Activated B cell treated with CpG ODN at 0.5 μM for 24 hours (primary cell): ENCODE measurements at regions of chr7 and their contacts with region 1.

Region 1: DNA sequence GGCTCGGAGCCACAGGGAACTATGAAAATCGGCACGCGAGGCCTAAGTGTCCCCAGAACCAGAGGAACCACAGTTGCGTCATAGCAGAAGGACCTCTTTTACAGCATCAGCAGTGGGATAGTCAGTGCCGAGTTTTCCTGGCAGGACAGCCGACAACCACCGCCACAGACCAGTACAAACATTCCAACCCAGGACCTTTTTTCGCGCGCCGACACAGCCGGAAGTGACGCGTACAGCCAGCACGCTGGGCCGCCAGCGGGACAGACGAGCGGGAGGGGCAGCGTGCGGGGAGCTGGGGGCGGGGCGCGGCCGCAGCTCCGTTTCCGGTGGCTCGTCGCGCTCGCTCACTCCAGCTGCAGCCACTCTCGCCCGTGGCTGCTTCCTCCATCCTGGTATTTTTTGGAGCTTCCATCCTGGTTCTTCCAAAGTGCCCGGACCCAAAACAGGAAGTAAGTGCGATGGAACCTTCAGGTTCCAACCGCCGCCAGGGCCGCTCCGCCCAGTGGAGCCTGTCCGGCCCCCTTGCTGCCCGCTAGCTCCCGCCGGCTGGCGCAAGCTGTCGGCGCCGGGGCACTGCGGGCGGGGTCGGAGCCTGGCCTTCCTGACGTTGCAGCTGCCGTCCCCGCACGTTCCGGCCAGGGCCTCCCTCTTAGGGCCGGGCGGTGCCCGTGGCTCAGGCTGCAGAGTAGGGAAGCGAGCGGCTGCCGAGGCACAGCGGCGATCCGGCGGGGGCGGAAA is at the start of gene DMTF1:
- DNase-seq: peak; percentile 81
- ATAC-seq: peak; percentile 85
- H3K4me3 Mint-ChIP-seq: peak within 1 kb of the TSS; percentile 99
- H3K27ac Mint-ChIP-seq: peak within 1 kb of the TSS; percentile 99
- H3K4me1 Mint-ChIP-seq: peaks cover 49% of the 10 kb centered on the region
- H3K27me3 Mint-ChIP-seq: no peaks in the 10 kb centered on the region
- CTCF ChIP-seq: no peak
- total RNA-seq, gene DMTF1: 159 and 175 TPM in 2 replicates

Region 2: DNA sequence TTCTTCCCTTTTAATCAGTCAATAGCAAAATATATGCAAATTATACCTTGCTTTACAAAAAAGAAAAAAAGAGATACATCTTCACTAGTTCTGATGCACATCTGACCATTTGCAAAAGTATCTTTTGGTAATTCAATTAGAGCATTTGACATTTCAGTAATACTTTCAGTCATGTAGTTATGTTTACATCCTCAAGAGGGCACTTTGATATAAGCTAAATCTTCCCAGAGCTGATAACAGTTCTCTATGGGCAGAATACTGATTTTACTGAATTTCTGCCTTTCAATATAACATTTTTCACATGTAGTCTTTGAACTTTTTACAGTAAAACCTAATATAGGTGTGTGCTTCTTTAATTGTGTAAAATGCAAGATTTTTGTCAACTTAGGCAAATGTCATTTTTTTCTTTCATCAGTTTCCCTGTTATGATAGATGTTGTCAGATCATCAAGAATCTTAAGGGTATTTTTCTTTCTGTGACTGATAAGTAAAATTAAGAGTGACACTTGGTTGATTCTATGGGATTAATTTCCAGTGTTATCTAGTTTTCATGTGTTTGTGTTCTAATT is 1261.9 kb before region 1 on chr7:
- CTCF ChIA-PET with region 1: no interaction called
- POLR2A ChIA-PET with region 1: no interaction called
- intact Hi-C with region 1: no loop called
- DNase-seq: no peak
- ATAC-seq: no peak
- H3K4me3 Mint-ChIP-seq: no peak overlapping the region
- H3K27ac Mint-ChIP-seq: no peak overlapping the region
- H3K4me1 Mint-ChIP-seq: no peaks in the 10 kb centered on the region
- H3K27me3 Mint-ChIP-seq: no peaks in the 10 kb centered on the region
- CTCF ChIP-seq: no peak

Region 3: GRCh38 chr7:86939197-86939814 is 213.0 kb before region 1 on chr7:
- CTCF ChIA-PET with region 1: interaction called, 8 read pairs
- POLR2A ChIA-PET with region 1: no interaction called
- intact Hi-C with region 1: loop called (anchors 1 kb)
- DNase-seq: no peak
- ATAC-seq: peak; percentile 66
- H3K4me3 Mint-ChIP-seq: no peak overlapping the region
- H3K27ac Mint-ChIP-seq: no peak overlapping the region
- H3K4me1 Mint-ChIP-seq: no peaks in the 10 kb centered on the region
- H3K27me3 Mint-ChIP-seq: no peaks in the 10 kb centered on the region
- CTCF ChIP-seq: peak; percentile 35

Region 4: DNA sequence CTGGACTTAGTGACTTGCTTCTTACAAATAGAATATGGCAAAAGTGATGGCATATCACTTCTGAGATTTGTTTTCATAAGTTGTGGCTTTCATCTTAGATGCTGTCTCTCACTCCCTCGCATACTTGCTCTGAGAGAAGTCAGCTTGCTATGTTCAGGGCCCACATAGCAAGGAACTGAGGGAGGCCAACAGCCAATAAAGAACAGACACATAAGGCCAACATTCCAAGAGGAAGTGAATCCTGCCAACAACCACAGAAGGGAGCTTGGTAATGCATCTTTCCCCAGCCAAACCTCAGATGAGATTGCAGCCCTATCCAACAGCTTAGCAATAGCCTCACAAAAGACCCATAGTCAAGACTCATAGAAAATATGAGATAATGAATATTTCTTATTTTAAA is 39.2 kb before region 1 on chr7:
- CTCF ChIA-PET with region 1: no interaction called
- POLR2A ChIA-PET with region 1: no interaction called
- intact Hi-C with region 1: no loop called
- DNase-seq: no peak
- ATAC-seq: no peak
- H3K4me3 Mint-ChIP-seq: no peak overlapping the region
- H3K27ac Mint-ChIP-seq: no peak overlapping the region
- H3K4me1 Mint-ChIP-seq: no peaks in the 10 kb centered on the region
- H3K27me3 Mint-ChIP-seq: peaks cover 1% of the 10 kb centered on the region
- CTCF ChIP-seq: no peak

Region 5: DNA sequence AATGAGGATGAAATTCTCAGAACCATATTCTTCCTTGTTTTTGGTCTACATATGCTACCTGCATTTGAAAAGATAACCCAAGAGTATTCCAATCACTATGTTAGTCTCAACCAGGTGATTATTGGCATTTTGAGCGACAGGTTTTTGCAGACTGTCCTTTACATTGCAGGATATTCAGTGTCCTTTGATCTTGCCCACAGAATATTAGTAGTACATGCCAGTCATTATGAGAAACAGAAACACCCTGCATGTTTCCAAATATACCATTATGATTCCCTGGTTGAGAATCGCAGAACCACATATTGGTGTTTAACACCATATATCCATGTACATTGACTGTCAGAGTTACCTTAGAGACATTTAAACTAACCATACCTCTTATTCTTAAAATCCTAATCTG is 36.7 kb after region 1 on chr7:
- CTCF ChIA-PET with region 1: no interaction called
- POLR2A ChIA-PET with region 1: interaction called, 8 read pairs
- intact Hi-C with region 1: loop called (anchors 5 kb)
- DNase-seq: no peak
- ATAC-seq: no peak
- H3K4me3 Mint-ChIP-seq: no peak overlapping the region
- H3K27ac Mint-ChIP-seq: peak overlapping the region; percentile 71
- H3K4me1 Mint-ChIP-seq: peaks cover 28% of the 10 kb centered on the region
- H3K27me3 Mint-ChIP-seq: no peaks in the 10 kb centered on the region
- CTCF ChIP-seq: no peak

Region 6: DNA sequence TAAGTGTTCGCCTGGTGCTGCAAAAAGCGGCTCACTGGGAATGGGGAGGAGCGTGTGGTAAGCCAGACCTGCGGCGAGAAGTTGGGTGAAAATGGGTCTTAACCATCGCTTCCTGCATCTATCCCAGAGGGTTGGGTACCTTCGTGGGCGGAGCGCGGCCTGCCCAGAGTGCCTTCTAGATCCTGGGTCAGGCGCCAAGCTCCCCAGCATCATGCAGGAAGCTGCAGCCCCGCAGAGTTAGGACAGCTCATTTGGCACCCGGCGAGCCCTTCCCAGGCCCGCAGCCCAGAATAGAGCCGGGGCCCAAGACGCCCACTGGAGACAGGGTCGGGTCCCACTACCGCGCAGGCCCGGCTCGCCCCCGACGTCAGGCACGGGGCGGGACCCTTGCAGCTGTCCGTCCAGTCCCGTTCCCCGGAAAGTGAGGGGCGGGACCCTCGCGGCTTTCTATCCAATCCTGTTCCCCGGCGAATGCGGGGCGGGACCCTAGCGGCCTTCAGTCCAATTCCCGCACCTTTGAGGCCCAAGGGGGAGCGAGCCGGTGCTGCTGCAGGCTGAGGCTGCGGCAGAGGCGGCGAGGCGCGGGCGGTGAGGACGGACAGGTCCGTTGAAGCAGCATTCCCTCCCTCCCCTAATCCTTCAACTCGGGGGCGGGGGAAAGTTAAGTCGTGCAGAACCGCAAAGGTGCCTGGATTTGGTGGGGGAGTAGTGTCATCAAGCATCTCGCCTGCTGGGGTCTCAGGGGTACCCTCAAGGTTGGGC is 193.1 kb after region 1 on chr7 and contains the start of gene CROT:
- CTCF ChIA-PET with region 1: no interaction called
- POLR2A ChIA-PET with region 1: interaction called, 7 read pairs
- intact Hi-C with region 1: loop called (anchors 2 kb)
- DNase-seq: peak; percentile 95
- ATAC-seq: peak; percentile 98
- H3K4me3 Mint-ChIP-seq: peak within 1 kb of the TSS; percentile 96
- H3K27ac Mint-ChIP-seq: peak within 1 kb of the TSS; percentile 96
- H3K4me1 Mint-ChIP-seq: peaks cover 25% of the 10 kb centered on the region
- H3K27me3 Mint-ChIP-seq: no peaks in the 10 kb centered on the region
- CTCF ChIP-seq: no peak
- total RNA-seq, gene CROT: 7.9 and 9.2 TPM in 2 replicates

Region 7: DNA sequence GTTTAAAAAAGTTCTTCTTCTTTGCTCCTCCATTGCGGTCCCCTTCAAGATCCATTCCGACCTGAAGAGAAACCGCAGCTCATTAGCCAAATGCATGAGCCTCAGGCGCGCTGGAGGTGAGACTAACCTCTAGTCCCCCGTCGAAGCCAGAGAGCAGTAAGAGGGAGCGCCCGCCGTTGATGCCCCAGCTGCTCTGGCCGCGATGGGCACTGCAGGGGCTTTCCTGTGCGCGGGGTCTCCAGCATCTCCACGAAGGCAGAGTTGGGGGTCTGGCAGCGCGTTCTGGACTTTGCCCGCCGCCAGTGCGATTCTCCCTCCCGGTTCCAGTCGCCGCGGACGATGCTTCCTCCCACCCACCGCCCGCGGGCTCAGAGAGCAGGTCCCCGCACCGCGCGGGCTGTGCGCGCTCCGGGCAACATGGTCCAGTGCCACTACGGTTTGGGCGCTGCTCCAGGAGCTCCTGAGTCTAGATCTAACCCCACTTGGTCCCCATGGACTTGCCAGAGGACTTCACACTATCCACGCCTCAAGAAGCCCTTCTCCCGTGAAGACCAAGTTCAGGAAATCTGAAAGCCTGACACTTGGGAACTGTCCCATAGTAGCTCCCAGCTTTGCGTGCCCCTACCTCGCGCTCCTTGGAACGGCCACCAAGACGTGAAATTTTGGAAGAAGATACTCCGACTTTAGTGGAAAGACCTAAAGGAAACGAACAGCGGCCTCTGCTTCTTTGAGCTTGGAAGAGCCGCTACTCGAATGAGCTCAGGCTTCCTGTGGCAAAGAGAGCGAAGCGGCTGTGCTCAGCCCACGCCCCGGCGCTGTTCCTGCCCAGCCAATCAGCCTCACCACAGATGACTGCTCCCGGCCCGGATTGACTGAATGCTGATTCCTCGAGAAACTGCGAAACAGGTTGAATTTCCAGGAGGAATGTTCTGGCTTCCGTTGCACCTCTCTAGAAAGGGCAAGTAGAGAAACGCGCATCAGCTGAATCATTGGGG is 448.2 kb after region 1 on chr7 and contains the start of gene ABCB1:
- CTCF ChIA-PET with region 1: no interaction called
- POLR2A ChIA-PET with region 1: interaction called, 5 read pairs
- intact Hi-C with region 1: loop called (anchors 10 kb)
- DNase-seq: peak; percentile 37
- ATAC-seq: peak; percentile 73
- H3K4me3 Mint-ChIP-seq: peak within 1 kb of the TSS; percentile 89
- H3K27ac Mint-ChIP-seq: peak within 1 kb of the TSS; percentile 76
- H3K4me1 Mint-ChIP-seq: peaks cover 22% of the 10 kb centered on the region
- H3K27me3 Mint-ChIP-seq: peaks cover 33% of the 10 kb centered on the region
- CTCF ChIP-seq: no peak
- total RNA-seq, gene ABCB1: 4.1 and 4.7 TPM in 2 replicates

Region 8: GRCh38 chr7:87933945-87934698 is 781.8 kb after region 1 on chr7 and contains the start of gene ADAM22:
- CTCF ChIA-PET with region 1: no interaction called
- POLR2A ChIA-PET with region 1: no interaction called
- intact Hi-C with region 1: loop called (anchors 2 kb)
- DNase-seq: peak; percentile 68
- ATAC-seq: peak; percentile 97
- H3K4me3 Mint-ChIP-seq: peak within 1 kb of the TSS; percentile 89
- H3K27ac Mint-ChIP-seq: peak within 1 kb of the TSS; percentile 32
- H3K4me1 Mint-ChIP-seq: peaks cover 14% of the 10 kb centered on the region
- H3K27me3 Mint-ChIP-seq: peaks cover 11% of the 10 kb centered on the region
- CTCF ChIP-seq: no peak
- total RNA-seq, gene ADAM22: 0.71 and 0.88 TPM in 2 replicates